ENCODE measurements at regions of chr17 and their contacts with region 1.

Region 1: GRCh38 chr17:17919169-17920107 is 52.8 kb downstream of the TOM1L2 start:
- DNase-seq: peak; percentile 29
- ATAC-seq: peak; percentile 84
- H3K4me3 Mint-ChIP-seq: no peak overlapping the region
- H3K27ac Mint-ChIP-seq: no peak overlapping the region
- H3K4me1 Mint-ChIP-seq: no peaks in the 10 kb centered on the region
- H3K27me3 Mint-ChIP-seq: no peaks in the 10 kb centered on the region
- CTCF ChIP-seq: no peak

Region 2: GRCh38 chr17:17812211-17813057 is 107.0 kb before region 1 on chr17:
- CTCF ChIA-PET with region 1: interaction called, 12 read pairs
- POLR2A ChIA-PET with region 1: no interaction called
- intact Hi-C with region 1: loop called (anchors 1 kb)
- DNase-seq: peak; percentile 81
- ATAC-seq: peak; percentile 82
- H3K4me3 Mint-ChIP-seq: no peak overlapping the region
- H3K27ac Mint-ChIP-seq: no peak overlapping the region
- H3K4me1 Mint-ChIP-seq: peaks cover 11% of the 10 kb centered on the region
- H3K27me3 Mint-ChIP-seq: no peaks in the 10 kb centered on the region
- CTCF ChIP-seq: peak; percentile 70

Measured in activated B cell treated with CpG ODN at 0.5 μM for 24 hours (primary cell).